GM18951 (cell line): ENCODE measurements at regions of chr15 and their contacts with region 1.

Region 1: DNA sequence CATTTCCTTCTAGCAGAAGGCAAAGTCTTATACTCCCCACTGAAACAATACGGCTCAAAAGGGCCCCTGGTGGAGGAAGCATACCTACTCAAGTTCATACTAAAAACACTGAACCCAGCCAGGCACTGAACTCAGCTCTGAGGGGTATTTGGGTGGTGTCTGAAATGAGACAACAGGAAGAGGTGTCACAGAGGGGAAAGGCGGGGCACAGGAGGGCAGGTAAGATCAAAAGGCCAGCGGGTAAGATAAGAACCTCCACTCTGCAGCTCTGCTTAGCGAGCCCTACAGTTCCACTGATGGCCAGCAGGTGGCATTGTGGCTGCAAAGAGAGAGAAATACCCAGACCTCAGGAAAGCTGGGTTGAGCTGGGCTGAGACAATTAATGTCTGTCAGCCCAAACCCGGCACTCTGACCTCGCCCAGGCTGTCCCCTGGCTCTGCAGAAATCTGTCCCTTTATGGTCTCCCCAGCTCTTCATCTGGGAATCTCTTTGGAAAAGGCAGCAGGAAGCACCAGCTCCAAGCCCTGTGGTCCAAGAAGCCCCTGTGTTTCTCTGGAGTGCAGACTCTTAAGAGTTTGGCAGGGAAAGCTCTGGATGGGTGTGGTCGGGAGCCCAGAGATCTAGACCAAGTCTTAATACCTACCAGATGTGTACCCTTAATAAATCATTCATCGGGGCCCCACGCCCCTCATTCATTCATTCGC is 8.4 kb downstream of the MFGE8 start:
- POLR2A ChIP-seq: no peak

Region 2: DNA sequence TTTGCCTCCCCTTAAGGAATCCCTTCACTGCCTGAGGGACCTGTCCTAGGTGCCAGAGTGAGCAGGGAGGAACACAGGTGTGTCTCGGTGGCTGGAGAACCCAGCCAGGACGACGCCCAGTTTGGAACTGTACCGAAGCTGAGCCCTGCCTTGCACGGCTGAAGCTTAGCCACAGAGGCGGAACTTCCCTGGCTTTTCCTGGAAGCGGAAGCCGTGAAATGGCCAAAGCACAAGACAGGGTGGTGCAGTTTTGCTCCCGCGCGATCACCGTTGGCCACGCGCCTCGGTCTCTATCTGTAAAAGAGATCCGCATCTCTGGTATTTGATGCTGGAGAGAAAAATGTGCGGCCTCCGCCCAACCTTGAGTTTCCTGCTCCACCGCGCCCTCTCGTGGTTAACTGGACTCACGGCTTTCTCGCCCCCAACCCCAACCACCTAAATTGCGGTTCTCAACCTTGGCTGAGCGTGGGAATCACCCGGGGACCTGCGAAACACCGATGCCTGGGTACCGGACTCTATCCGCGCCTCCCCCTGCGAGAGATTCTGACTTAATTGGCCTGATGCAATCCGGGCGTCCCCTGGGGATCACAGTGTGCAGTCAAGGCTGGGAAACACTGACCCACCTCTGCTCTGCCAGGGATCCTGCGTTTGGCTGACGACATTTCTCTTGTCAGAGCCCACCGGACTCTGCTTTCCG is 112.7 kb after region 1 on chr15:
- in situ Hi-C with region 1: loop called (anchors 5 kb)
- POLR2A ChIP-seq: no peak